ENCODE measurements at regions of chr15 and their contacts with region 1.

Region 1: DNA sequence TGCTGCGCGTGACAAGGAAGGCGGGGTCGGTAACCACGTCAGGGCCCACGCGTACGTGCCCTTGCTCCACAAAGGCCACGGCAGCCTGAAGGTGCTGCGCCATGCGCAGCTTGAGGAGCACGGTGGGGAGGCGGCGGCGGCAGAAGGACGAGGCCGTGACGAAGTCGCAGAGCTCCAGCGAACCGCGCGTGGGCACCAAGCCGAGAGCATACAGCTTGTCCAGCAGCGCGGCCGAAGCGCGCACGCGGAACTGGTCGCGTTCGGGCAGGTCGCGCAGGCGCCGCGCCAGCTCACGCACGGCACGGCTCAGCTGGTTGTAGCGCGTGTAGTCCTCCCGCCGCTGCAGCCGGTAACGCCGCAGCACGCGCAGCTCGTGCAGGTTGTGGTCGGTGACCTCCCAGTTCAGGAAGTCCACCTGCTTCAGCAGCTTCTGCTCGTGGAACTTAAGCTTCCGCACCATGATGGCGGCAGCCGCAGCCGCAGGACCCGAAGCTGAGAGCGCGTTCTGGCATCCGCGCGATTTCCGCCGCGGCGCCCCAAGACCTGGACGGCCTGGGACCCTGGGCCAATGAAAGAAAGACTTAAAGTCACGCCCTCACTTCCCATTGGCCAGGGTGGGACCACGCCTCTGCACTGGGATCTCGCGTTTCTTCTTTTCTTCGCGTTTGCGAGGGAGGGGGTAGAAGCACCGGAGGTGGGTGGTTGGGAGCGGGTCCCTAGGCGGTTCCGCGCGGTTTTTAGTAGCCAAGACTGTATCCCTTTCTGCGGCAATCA is at the start of gene IMP3:
- DNase-seq: peak; percentile 95 to 97
- ATAC-seq: peak; percentile 90 to 92
- H3K4me3 ChIP-seq: peak within 1 kb of the TSS; percentile 75 to 97 (median 82)
- H3K27ac ChIP-seq: peak within 1 kb of the TSS; percentile 87 to 95 (median 92)
- H3K4me1 ChIP-seq: peaks cover 26 to 28% of the 10 kb centered on the region in 2 donors
- H3K27me3 ChIP-seq: no peaks in the 10 kb centered on the region
- CTCF ChIP-seq: peak in 1 of 5 experiments; percentile 26
- POLR2A ChIP-seq: peak; percentile 89 to 94
- total RNA-seq, gene IMP3: 110 to 184 (median 153) TPM

Region 2: GRCh38 chr15:75367913-75368688 is 271.8 kb before region 1 on chr15 and contains the start of gene MAN2C1:
- in situ Hi-C with region 1: loop called in 2 of 4 experiments (anchors 25 kb)
- intact Hi-C with region 1: loop called (anchors 1 kb)
- DNase-seq: peak; percentile 92 to 97
- ATAC-seq: peak; percentile 89 to 93
- H3K4me3 ChIP-seq: peak within 1 kb of the TSS; percentile 87 to 99 (median 96)
- H3K27ac ChIP-seq: peak within 1 kb of the TSS; percentile 96 to 100 (median 98)
- H3K4me1 ChIP-seq: peaks cover 18 to 19% of the 10 kb centered on the region in 2 donors
- H3K27me3 ChIP-seq: no peaks in the 10 kb centered on the region
- CTCF ChIP-seq: peak in 3 of 5 experiments; percentile 72 to 81 (median 80)
- POLR2A ChIP-seq: peak; percentile 86 to 89
- total RNA-seq, gene MAN2C1: 38.9 to 116 (median 62.8) TPM

Region 3: GRCh38 chr15:75625542-75626347 is 14.2 kb before region 1 on chr15 and contains the start of gene SNUPN:
- in situ Hi-C with region 1: no loop called
- intact Hi-C with region 1: loop called (anchors 1 kb)
- DNase-seq: peak; percentile 92 to 93
- ATAC-seq: peak; percentile 95
- H3K4me3 ChIP-seq: peak within 1 kb of the TSS; percentile 82 to 93 (median 84)
- H3K27ac ChIP-seq: peak within 1 kb of the TSS; percentile 95 to 97 (median 96)
- H3K4me1 ChIP-seq: peaks cover 4 to 6% of the 10 kb centered on the region in 2 donors
- H3K27me3 ChIP-seq: no peaks in the 10 kb centered on the region
- CTCF ChIP-seq: no peak
- POLR2A ChIP-seq: peak; percentile 38 to 53
- total RNA-seq, gene SNUPN: 14.2 to 18.3 (median 15.9) TPM

Region 4: GRCh38 chr15:75673426-75674235 is 33.7 kb after region 1 on chr15:
- in situ Hi-C with region 1: loop called in 1 of 4 experiments (anchors 5 kb)
- intact Hi-C with region 1: loop called (anchors 2 kb)
- DNase-seq: peak in 1 of 2 donors; percentile 75
- ATAC-seq: peak; percentile 41 to 51
- H3K4me3 ChIP-seq: no peak overlapping the region
- H3K27ac ChIP-seq: peak overlapping the region; percentile 65 to 78 (median 70)
- H3K4me1 ChIP-seq: peaks cover 35 to 45% of the 10 kb centered on the region in 2 donors
- H3K27me3 ChIP-seq: no peaks in the 10 kb centered on the region
- CTCF ChIP-seq: no peak
- POLR2A ChIP-seq: no peak

Region 5: GRCh38 chr15:75738647-75739331 is 98.9 kb after region 1 on chr15:
- in situ Hi-C with region 1: no loop called
- intact Hi-C with region 1: loop called (anchors 10 kb)
- DNase-seq: peak; percentile 76 to 91
- ATAC-seq: peak; percentile 90 to 94
- H3K4me3 ChIP-seq: peak overlapping the region; percentile 57 to 92 (median 76)
- H3K27ac ChIP-seq: peak overlapping the region in 1 of 4 donors; percentile 48
- H3K4me1 ChIP-seq: peaks cover 0 to 11% of the 10 kb centered on the region in 2 donors
- H3K27me3 ChIP-seq: no peaks in the 10 kb centered on the region
- CTCF ChIP-seq: no peak
- POLR2A ChIP-seq: peak in 1 of 2 donors; percentile 8

Region 6: DNA sequence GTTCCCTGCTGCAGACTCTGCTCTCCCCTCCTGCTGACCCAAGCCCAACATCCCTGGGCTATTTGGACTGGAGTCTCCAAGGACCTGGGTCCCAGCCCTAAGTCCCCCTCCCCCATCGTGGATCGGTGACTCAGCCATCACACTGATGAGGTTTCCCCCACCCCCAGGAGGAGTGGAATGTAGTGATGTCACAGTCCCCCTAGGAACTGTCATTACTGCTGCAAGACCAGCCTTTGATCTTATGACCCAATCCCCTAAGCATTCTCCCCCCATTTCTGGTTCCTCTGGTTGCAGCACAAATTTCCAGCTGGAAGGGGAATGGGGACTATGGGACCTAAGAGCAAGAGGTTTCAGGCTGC is 136.1 kb after region 1 on chr15:
- in situ Hi-C with region 1: no loop called
- intact Hi-C with region 1: no loop called
- DNase-seq: no peak
- ATAC-seq: no peak
- H3K4me3 ChIP-seq: no peak overlapping the region
- H3K27ac ChIP-seq: no peak overlapping the region
- H3K4me1 ChIP-seq: no peaks in the 10 kb centered on the region
- H3K27me3 ChIP-seq: no peaks in the 10 kb centered on the region
- CTCF ChIP-seq: no peak
- POLR2A ChIP-seq: no peak